GM12878 (cell line): ENCODE measurements at regions of chr3 and their contacts with region 1.

Region 1: GRCh38 chr3:122793568-122794416 is at the start of gene HSPBAP1:
- DNase-seq: peak; percentile 68
- ATAC-seq: peak; percentile 76
- H3K4me3 ChIP-seq: peak within 1 kb of the TSS; percentile 77
- H3K27ac ChIP-seq: peak within 1 kb of the TSS; percentile 47
- H3K4me1 ChIP-seq: no peaks in the 10 kb centered on the region
- H3K27me3 ChIP-seq: no peaks in the 10 kb centered on the region
- CTCF ChIP-seq: no peak
- EP300 ChIP-seq: peak in 1 of 2 experiments; percentile 44; a peak in 1 of 4 replicates
- POLR2A ChIP-seq: peak; percentile 83
- RAD21 ChIP-seq: no peak
- polyA plus RNA-seq, gene HSPBAP1: 3.2 to 3.5 TPM

Region 2: GRCh38 chr3:122774564-122774963 is 19.2 kb before region 1 on chr3:
- CTCF ChIA-PET with region 1: interaction called, 3 read pairs
- POLR2A ChIA-PET with region 1: interaction called, 10 read pairs
- RAD21 ChIA-PET with region 1: interaction called, 13 read pairs
- SMC1A ChIA-PET with region 1: interaction called, 11 read pairs
- in situ Hi-C with region 1: no loop called
- intact Hi-C with region 1: loop called (anchors 1 kb)
- DNase-seq: no peak
- ATAC-seq: peak; percentile 32
- H3K4me3 ChIP-seq: no peak overlapping the region
- H3K27ac ChIP-seq: peak overlapping the region; percentile 63
- H3K4me1 ChIP-seq: peaks cover 16% of the 10 kb centered on the region
- H3K27me3 ChIP-seq: no peaks in the 10 kb centered on the region
- CTCF ChIP-seq: no peak
- EP300 ChIP-seq: no peak
- POLR2A ChIP-seq: no peak
- RAD21 ChIP-seq: no peak

Region 3: GRCh38 chr3:122929190-122930062 is 135.6 kb after region 1 on chr3:
- CTCF ChIA-PET with region 1: no interaction called
- POLR2A ChIA-PET with region 1: no interaction called
- RAD21 ChIA-PET with region 1: no interaction called
- SMC1A ChIA-PET with region 1: no interaction called
- in situ Hi-C with region 1: no loop called
- intact Hi-C with region 1: no loop called
- DNase-seq: no peak
- ATAC-seq: no peak
- H3K4me3 ChIP-seq: no peak overlapping the region
- H3K27ac ChIP-seq: no peak overlapping the region
- H3K4me1 ChIP-seq: no peaks in the 10 kb centered on the region
- H3K27me3 ChIP-seq: no peaks in the 10 kb centered on the region
- CTCF ChIP-seq: no peak
- EP300 ChIP-seq: no peak
- POLR2A ChIP-seq: no peak
- RAD21 ChIP-seq: no peak

Region 4: GRCh38 chr3:122996038-122996580 is 202.3 kb after region 1 on chr3:
- CTCF ChIA-PET with region 1: no interaction called
- POLR2A ChIA-PET with region 1: no interaction called
- RAD21 ChIA-PET with region 1: no interaction called
- SMC1A ChIA-PET with region 1: no interaction called
- in situ Hi-C with region 1: no loop called
- intact Hi-C with region 1: no loop called
- DNase-seq: no peak
- ATAC-seq: no peak
- H3K4me3 ChIP-seq: no peak overlapping the region
- H3K27ac ChIP-seq: no peak overlapping the region
- H3K4me1 ChIP-seq: no peaks in the 10 kb centered on the region
- H3K27me3 ChIP-seq: peaks cover 0 to 2% of the 10 kb centered on the region in 2 experiments; a peak in 3 of 4 replicates
- CTCF ChIP-seq: no peak
- EP300 ChIP-seq: no peak
- POLR2A ChIP-seq: no peak
- RAD21 ChIP-seq: no peak